Endothelial cell of umbilical vein (primary cell): ENCODE measurements at regions of chr17 and their contacts with region 1.

Region 1: GRCh38 chr17:2192367-2193057 is 111.1 kb downstream of the SMG6 start:
- DNase-seq: peak; percentile 98
- H3K4me3 ChIP-seq: no peak overlapping the region
- H3K27ac ChIP-seq: peak overlapping the region; percentile 88
- H3K4me1 ChIP-seq: peaks cover 40% of the 10 kb centered on the region
- H3K27me3 ChIP-seq: no peaks in the 10 kb centered on the region
- CTCF ChIP-seq: no peak
- POLR2A ChIP-seq: peak; percentile 75

Region 2: GRCh38 chr17:2064980-2065785 is 127.3 kb before region 1 on chr17:
- CTCF ChIA-PET with region 1: no interaction called
- POLR2A ChIA-PET with region 1: no interaction called
- dilution Hi-C with region 1: no loop called
- intact Hi-C with region 1: loop called (anchors 1 kb)
- DNase-seq: peak; percentile 79
- H3K4me3 ChIP-seq: no peak overlapping the region
- H3K27ac ChIP-seq: peak overlapping the region; percentile 78
- H3K4me1 ChIP-seq: peaks cover 53% of the 10 kb centered on the region
- H3K27me3 ChIP-seq: no peaks in the 10 kb centered on the region
- CTCF ChIP-seq: peak; percentile 66 to 70
- POLR2A ChIP-seq: no peak

Region 3: GRCh38 chr17:2179615-2180295 is 12.8 kb before region 1 on chr17:
- CTCF ChIA-PET with region 1: interaction called, 15 read pairs
- POLR2A ChIA-PET with region 1: interaction called, 11 read pairs
- dilution Hi-C with region 1: no loop called
- intact Hi-C with region 1: loop called (anchors 1 kb)
- DNase-seq: peak; percentile 98
- H3K4me3 ChIP-seq: no peak overlapping the region
- H3K27ac ChIP-seq: peak overlapping the region; percentile 94
- H3K4me1 ChIP-seq: peaks cover 75% of the 10 kb centered on the region
- H3K27me3 ChIP-seq: no peaks in the 10 kb centered on the region
- CTCF ChIP-seq: no peak
- POLR2A ChIP-seq: peak; percentile 29